Aorta (tissue), 5 donors: ENCODE measurements at regions of chr15 and their contacts with region 1.

Region 1: DNA sequence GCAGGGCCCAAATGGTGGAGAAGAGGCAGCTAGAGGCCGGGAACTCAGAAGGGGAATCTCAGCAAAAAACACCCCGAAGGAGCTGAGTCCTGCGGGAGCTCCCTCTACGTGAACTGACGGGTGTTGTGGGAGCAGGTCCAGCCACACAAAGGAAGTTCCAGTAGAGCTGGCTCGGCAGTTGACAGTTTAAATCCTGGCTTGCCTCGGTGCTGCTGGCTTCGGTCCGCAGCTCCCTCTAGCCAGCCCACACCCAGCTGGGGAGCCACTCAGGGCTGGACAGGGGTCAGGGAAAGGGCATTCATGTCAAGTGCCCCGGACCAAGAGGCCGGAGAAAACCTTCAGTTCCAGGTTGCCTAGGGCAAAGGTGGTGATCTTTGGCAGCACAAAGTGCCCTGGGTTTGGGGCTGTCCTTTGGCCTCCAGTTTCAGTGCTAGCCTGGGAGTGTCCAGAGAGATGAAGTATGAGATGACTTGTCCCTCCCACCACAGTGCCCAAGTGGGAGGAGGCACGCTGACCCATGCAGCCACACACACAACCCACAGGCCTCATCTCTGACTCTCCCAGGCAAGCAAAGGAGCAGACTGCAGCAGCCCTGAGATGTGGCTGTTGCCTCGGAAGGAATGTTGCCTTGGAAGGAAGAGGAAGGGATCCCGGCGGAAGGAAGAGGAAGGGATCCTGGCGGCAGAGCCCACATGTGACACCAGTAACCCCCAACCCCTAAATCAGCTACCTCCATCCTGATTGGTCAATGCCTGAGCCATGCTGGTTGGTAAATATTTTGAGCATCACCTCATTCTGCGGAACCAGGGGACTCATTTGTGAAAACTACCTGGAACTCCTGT is 13.8 kb upstream of the ANPEP start:
- DNase-seq: peak in 1 of 2 donors; percentile 80
- ATAC-seq: peak; percentile 68
- H3K4me3 ChIP-seq: no peak overlapping the region
- H3K27ac ChIP-seq: peak overlapping the region in 1 of 2 donors; percentile 20
- H3K4me1 ChIP-seq: no peaks in the 10 kb centered on the region
- H3K27me3 ChIP-seq: no peaks in the 10 kb centered on the region

Region 2: DNA sequence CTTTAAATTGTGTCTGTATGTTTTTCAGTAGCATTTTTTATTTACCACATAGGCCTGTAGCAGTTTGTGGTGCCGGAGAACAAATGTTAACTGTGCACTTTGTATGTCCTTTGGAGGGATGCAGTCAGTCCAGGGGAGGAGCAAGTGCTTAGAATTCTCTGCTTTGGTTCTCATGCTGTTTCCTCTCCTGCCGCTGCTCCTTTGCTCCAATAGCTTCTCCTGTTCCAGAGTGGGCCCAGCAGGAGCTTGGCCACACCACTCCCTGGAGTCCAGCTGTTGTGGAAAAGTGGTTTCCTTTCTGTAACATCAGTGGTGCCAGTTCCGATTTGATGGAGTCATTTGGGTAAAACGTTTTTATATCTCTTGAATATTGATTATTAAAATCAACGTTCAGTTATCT is 236.6 kb before region 1 on chr15:
- intact Hi-C with region 1: no loop called
- DNase-seq: no peak
- ATAC-seq: no peak
- H3K4me3 ChIP-seq: no peak overlapping the region
- H3K27ac ChIP-seq: no peak overlapping the region
- H3K4me1 ChIP-seq: no peaks in the 10 kb centered on the region
- H3K27me3 ChIP-seq: no peaks in the 10 kb centered on the region

Region 3: GRCh38 chr15:89647191-89647851 is 181.1 kb before region 1 on chr15:
- intact Hi-C with region 1: no loop called
- DNase-seq: peak; percentile 81 to 94
- ATAC-seq: peak; percentile 86
- H3K4me3 ChIP-seq: no peak overlapping the region
- H3K27ac ChIP-seq: no peak overlapping the region
- H3K4me1 ChIP-seq: no peaks in the 10 kb centered on the region
- H3K27me3 ChIP-seq: no peaks in the 10 kb centered on the region

Region 4: DNA sequence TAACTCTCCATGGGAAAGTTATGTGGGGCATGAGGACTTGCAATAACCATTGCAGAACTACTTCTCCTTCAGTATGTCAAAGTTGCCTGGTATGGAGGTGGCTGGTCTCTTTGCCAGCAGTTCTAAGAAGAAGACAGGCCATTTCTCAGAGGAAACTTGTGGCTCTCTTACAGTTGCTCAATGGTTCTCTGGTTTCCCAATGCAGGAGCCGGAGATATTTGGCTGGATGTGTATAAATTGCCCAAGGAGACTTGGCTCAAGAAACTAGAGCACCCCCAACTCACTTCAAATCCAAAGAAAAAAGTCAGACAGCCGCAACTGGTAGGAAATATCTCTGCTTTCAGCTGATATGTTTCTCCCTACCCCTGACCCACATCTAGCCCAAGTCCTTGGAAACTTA is 113.7 kb before region 1 on chr15:
- intact Hi-C with region 1: no loop called
- DNase-seq: no peak
- ATAC-seq: no peak
- H3K4me3 ChIP-seq: no peak overlapping the region
- H3K27ac ChIP-seq: no peak overlapping the region
- H3K4me1 ChIP-seq: no peaks in the 10 kb centered on the region
- H3K27me3 ChIP-seq: no peaks in the 10 kb centered on the region

Region 5: DNA sequence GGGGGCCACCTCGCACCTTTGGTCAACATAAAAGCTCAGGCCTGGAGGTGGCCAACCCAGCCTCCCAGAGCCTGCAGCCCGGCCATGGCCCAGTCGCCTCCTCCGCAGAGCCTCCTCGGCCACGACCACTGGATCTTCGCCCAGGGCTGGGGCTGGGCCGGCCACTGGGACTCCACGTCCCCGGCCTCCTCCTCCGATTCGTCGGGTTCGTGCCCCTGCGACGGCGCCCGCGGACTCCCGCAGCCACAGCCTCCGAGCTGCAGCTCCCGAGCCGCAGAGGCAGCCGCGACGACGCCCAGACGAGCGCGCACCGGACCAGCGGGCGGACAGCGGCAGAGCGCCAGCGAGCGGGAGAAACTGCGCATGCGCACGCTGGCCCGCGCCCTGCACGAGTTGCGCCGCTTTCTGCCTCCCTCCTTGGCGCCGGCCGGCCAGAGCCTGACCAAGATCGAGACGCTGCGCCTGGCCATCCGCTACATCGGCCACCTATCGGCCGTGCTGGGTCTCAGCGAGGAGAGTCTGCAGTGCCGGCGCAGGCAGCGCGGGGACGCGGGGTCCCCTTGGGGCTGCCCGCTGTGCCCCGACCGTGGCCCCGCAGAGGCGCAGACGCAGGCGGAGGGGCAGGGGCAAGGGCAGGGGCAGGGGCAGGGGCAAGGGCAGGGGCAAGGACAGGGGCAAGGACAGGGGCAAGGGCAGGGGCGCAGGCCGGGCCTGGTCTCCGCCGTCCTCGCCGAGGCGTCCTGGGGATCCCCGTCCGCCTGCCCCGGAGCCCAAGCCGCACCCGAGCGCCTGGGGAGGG is 52.0 kb before region 1 on chr15 and contains the start of gene MESP2:
- intact Hi-C with region 1: loop called in 1 of 2 experiments (anchors 10 kb)
- DNase-seq: peak; percentile 91 to 95
- ATAC-seq: peak; percentile 95
- H3K4me3 ChIP-seq: no peak within 1 kb of the TSS
- H3K27ac ChIP-seq: no peak within 1 kb of the TSS
- H3K4me1 ChIP-seq: no peaks in the 10 kb centered on the region
- H3K27me3 ChIP-seq: no peaks in the 10 kb centered on the region
- total RNA-seq, gene MESP2: not detected